ENCODE measurements at regions of chr20 and their contacts with region 1.

Region 1: DNA sequence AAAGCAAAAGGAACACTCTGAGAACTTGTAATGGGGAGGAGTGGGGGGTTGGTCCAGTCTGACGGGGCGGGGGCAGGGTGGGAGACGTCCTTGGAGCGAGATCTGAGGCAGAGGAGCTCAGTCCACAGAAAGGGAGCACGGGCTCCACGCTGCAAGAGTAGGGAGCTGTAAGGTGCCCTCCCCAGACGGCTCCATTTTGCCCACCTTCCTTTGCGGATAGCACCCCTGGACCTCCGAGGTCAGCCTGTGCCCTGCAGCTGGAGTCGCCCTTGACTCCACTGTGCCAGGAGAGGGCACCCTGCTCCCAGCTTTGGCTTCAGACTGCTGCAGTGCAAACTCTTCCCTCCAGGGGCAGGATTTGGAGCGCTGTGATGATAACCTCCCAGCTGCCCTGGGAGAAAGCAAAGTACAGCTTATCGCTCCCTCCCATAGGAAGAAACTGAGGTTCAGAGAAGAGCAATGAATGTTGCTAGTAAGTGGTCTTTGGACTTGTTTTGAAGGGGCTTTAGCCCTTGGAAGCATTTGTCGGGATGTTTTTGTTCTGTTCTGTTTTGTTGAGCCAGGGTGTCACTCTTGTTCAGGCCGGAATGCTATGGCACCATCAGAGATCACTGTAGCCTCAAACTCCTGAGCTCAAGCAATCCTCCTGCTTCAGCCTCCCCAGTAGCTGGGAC is 9.5 kb upstream of the AHCY start:
- DNase-seq: peak; percentile 94
- H3K4me3 Mint-ChIP-seq: no peak overlapping the region
- H3K27ac Mint-ChIP-seq: no peak overlapping the region
- H3K4me1 Mint-ChIP-seq: peaks cover 6% of the 10 kb centered on the region
- H3K27me3 Mint-ChIP-seq: peaks cover 19% of the 10 kb centered on the region

Region 2: GRCh38 chr20:34407962-34408474 is 95.3 kb after region 1 on chr20:
- CTCF ChIA-PET with region 1: interaction called, 11 read pairs
- POLR2A ChIA-PET with region 1: no interaction called
- intact Hi-C with region 1: no loop called
- DNase-seq: no peak
- H3K4me3 Mint-ChIP-seq: no peak overlapping the region
- H3K27ac Mint-ChIP-seq: no peak overlapping the region
- H3K4me1 Mint-ChIP-seq: peaks cover 28% of the 10 kb centered on the region
- H3K27me3 Mint-ChIP-seq: no peaks in the 10 kb centered on the region

Region 3: GRCh38 chr20:34445177-34446065 is 132.7 kb after region 1 on chr20:
- CTCF ChIA-PET with region 1: interaction called, 25 read pairs
- POLR2A ChIA-PET with region 1: no interaction called
- intact Hi-C with region 1: no loop called
- DNase-seq: no peak
- H3K4me3 Mint-ChIP-seq: no peak overlapping the region
- H3K27ac Mint-ChIP-seq: no peak overlapping the region
- H3K4me1 Mint-ChIP-seq: peaks cover 15% of the 10 kb centered on the region
- H3K27me3 Mint-ChIP-seq: no peaks in the 10 kb centered on the region

Region 4: DNA sequence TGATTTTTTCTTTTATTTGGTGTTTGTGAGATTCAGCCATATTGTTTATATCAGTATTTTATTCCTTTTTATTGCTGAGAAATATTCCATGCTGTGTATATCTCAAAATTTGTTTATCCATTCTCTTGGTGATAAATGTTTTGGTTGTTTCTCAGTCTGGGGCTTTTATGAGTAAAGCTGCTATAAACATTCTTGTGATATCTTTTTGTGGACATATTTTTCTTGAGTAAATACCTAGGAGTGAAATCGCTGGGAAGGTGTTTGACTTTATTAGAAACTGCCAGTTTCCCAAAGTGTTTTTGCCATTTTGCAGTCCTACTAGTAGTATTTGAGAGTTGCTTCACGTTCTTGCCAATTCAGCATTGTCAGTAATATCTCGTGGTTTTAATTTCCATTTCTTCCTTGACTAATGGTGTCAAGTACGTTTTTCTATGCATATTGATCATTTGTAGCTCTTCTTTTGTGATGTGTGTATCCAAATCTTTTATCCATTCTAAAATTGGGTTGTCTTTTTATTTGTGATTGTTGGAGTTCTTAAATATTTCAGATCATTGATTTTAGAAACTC is 172.5 kb after region 1 on chr20:
- CTCF ChIA-PET with region 1: interaction called, 13 read pairs
- POLR2A ChIA-PET with region 1: no interaction called
- intact Hi-C with region 1: no loop called
- DNase-seq: no peak
- H3K4me3 Mint-ChIP-seq: no peak overlapping the region
- H3K27ac Mint-ChIP-seq: no peak overlapping the region
- H3K4me1 Mint-ChIP-seq: no peaks in the 10 kb centered on the region
- H3K27me3 Mint-ChIP-seq: no peaks in the 10 kb centered on the region

Region 5: GRCh38 chr20:34522969-34523871 is 210.5 kb after region 1 on chr20:
- CTCF ChIA-PET with region 1: interaction called, 98 read pairs
- POLR2A ChIA-PET with region 1: interaction called, 3 read pairs
- intact Hi-C with region 1: loop called (anchors 1 kb)
- DNase-seq: peak; percentile 67
- H3K4me3 Mint-ChIP-seq: no peak overlapping the region
- H3K27ac Mint-ChIP-seq: no peak overlapping the region
- H3K4me1 Mint-ChIP-seq: peaks cover 35% of the 10 kb centered on the region
- H3K27me3 Mint-ChIP-seq: no peaks in the 10 kb centered on the region

Region 6: DNA sequence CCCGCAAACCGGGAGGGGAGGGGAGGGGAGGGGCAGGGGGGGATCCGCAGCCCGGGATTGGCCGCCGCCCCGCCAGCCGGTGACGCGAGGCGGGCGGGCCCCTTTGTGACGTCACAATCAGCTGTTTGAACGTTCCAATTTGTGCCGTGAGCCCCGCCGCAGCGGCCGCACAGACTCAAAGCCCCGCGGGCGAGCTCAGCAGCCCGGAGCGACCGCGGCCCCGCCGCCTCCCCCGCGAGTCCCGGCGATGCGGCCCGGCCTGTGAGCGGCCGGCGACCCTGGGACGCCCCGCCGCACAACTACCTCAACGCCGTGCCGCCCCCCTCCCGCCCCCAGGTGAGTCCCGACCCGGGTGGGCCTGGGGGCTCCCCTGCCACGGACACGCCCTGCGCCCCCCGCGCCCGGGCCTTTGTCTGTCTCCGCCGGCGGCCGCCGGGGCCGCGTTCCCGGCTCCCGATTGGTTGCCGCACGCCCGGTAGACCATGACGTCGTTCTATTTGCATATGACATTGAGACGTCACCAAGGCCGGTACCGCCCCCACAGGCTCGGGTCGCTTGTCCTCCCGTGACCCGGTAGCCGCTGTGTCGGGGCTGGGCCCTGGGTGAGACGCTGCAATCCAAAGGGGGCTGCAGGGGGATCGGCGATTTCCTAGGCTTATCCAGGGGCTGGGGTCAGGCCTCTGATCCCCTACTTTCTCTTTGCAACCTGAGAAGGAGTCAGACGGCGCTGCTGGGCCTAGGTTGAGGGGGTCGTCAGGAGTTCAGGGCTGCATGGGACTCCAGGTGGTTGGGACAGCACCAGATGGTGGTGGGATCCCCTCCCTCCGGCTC is 391.7 kb after region 1 on chr20 and contains the start of gene TP53INP2:
- CTCF ChIA-PET with region 1: interaction called, 24 read pairs
- POLR2A ChIA-PET with region 1: no interaction called
- intact Hi-C with region 1: loop called (anchors 2 kb)
- DNase-seq: peak; percentile 89
- H3K4me3 Mint-ChIP-seq: peak within 1 kb of the TSS; percentile 82
- H3K27ac Mint-ChIP-seq: peak within 1 kb of the TSS; percentile 63
- H3K4me1 Mint-ChIP-seq: peaks cover 17% of the 10 kb centered on the region
- H3K27me3 Mint-ChIP-seq: no peaks in the 10 kb centered on the region
- total RNA-seq, gene TP53INP2: 2.3 to 2.5 TPM

Measured in activated CD4-positive, alpha-beta memory T cell treated with anti-CD3 and anti-CD28 coated beads for 36 hours (primary cell).